Mammary epithelial cell (primary cell): ENCODE measurements at regions of chr2 and their contacts with region 1.

Region 1: DNA sequence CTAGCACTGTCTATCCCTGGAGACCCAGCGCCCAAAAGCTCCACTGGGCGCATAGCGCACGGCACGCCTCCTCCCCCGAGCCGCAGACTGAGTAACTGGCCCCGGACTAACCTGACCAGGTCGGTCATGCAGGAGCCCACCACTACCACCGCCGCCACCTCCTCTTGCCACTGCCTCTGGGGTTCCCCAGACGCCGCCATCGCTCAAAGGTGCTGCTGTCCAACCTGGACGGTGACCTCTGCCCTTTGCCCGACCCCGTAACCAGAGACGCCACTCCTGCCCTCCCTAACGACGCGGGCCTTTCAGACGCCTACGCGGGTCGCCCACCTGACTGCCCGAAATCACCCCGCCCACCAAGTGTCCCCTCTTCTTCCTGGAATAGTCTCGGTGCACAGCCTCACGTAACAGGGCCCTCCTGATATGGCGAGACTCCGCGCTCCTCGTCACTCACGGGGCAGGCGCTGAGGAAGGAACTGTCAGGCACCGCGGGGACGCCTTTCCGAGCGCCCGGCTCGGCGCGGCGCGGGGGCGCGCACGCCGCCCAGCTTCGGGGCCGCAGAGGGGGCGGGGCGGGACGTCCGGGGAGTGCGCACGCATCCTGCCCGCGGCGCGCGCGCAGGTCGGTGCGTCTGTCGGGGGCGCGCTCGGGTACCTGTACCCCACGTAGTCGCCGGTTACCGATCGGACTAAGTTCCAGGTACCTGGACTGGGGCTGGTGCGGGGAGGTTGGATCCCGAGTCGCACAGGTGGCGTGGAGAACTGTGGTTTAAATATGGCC is at the starts of genes BABAM2 and RBKS:
- DNase-seq: peak; percentile 84
- H3K4me3 ChIP-seq: peak within 1 kb of the TSS; percentile 60 to 76 (median 74)
- H3K27ac ChIP-seq: peak within 1 kb of the TSS; percentile 90
- H3K4me1 ChIP-seq: peaks cover 21% of the 10 kb centered on the region
- H3K27me3 ChIP-seq: no peaks in the 10 kb centered on the region
- CTCF ChIP-seq: no peak
- total RNA-seq, gene BABAM2: 27.9 to 35.0 TPM
- total RNA-seq, gene RBKS: 1.1 to 3.8 TPM

Region 2: DNA sequence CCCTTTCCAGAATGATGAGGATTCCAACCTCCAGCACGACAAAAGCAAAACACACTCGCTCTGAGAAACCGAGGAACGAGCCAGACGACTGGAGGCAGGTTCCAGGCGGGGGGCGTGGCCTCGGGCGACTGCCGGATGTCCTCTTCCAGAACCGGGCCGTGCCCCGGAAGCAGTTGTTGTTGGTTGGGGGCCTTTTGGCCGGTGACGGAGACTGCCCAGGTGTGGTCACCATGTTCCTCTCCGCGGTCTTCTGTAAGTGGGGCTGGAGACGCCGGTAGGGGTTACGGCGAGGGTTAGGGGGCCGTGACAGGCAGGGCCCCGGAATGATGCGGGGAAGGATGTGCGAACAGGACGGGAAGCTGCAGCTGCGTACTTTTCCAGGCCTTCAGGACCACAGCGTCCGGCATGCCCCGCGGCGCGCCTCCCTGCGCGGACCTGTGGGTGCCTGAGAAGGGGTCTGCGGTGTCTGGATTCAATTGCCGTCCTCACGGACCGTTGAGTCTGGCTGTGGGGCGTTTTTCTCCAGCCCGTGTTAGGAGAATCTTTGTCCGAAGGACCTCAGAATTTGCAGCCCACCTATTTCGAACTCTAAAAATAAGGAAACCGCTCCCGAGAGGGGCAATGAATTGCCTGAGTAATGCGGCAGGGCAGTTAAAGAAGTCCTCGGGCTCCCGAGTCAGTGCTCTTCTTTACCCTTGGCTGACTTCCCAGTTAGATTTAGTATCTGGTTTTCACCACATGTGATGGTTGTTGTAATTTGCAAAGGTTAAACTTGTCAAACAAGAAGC is 118.6 kb before region 1 on chr2 and contains the start of gene MRPL33:
- CTCF ChIA-PET with region 1: no interaction called
- dilution Hi-C with region 1: no loop called
- in situ Hi-C with region 1: no loop called
- intact Hi-C with region 1: loop called (anchors 1 kb)
- DNase-seq: peak; percentile 88
- H3K4me3 ChIP-seq: peak within 1 kb of the TSS; percentile 76 to 93 (median 91)
- H3K27ac ChIP-seq: peak within 1 kb of the TSS; percentile 78
- H3K4me1 ChIP-seq: peaks cover 24% of the 10 kb centered on the region
- H3K27me3 ChIP-seq: no peaks in the 10 kb centered on the region
- CTCF ChIP-seq: no peak
- total RNA-seq, gene MRPL33: 40.2 to 83.6 TPM

Region 3: GRCh38 chr2:27807476-27807875 is 82.9 kb before region 1 on chr2:
- CTCF ChIA-PET with region 1: no interaction called
- dilution Hi-C with region 1: no loop called
- in situ Hi-C with region 1: no loop called
- intact Hi-C with region 1: loop called (anchors 1 kb)
- DNase-seq: peak; percentile 35
- H3K4me3 ChIP-seq: no peak overlapping the region
- H3K27ac ChIP-seq: no peak overlapping the region
- H3K4me1 ChIP-seq: peaks cover 28% of the 10 kb centered on the region
- H3K27me3 ChIP-seq: no peaks in the 10 kb centered on the region
- CTCF ChIP-seq: peak; percentile 62 to 75

Region 4: DNA sequence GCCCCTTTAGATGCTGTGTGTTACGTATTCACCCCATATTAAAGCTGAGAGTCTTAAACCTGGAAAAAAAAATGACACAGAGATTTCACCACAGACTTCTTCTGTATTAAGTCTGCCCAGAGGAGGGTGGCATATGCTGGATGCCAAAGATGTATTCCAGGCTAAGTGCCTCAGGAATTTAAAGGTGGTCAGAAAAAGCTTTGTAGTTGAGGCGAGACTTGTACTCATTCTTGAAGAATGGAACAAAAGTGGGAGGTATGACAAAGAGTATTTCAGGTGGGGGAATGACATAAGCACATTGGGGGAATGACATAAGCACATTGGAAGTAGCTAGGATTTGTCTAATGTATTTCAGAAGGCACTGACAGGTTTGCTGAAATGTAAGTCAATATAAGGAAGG is 98.8 kb after region 1 on chr2:
- CTCF ChIA-PET with region 1: no interaction called
- dilution Hi-C with region 1: no loop called
- in situ Hi-C with region 1: no loop called
- intact Hi-C with region 1: loop called (anchors 5 kb)
- DNase-seq: peak; percentile 97
- H3K4me3 ChIP-seq: no peak overlapping the region
- H3K27ac ChIP-seq: peak overlapping the region; percentile 87
- H3K4me1 ChIP-seq: peaks cover 41% of the 10 kb centered on the region
- H3K27me3 ChIP-seq: no peaks in the 10 kb centered on the region
- CTCF ChIP-seq: peak in 1 of 2 donors; percentile 6